ENCODE measurements at regions of chr19 and their contacts with region 1.

Region 1: DNA sequence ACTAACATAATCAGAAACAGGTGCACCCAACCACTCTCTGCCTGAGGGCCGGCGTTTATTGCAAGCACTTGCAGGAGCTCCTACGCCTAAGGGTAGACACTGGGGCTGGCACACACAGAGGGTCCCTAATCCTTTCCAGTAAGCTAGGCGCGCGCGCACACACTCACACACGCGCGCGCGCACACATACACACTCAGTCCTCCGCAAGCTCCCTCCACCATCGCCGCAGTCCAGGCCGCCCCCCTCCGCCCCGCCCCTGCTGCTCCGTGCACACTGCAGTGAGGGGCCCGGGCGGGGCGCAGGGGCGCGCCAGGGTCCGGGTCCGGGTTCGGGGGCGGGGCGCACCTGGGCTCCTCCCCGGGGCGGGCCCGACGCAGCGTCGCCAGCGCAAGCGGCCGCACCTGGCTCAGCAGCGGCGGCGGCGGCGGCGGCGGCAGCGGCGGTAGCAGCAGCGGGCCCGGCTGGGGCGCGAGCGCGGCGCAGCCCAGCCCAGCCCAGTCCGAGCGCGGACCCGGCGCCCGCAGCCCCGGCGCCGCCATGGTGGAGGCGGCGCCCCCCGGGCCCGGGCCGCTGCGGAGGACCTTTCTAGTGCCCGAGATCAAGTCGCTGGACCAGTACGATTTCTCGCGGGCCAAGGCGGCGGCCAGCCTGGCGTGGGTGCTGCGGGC is at the start of gene CAMSAP3:
- DNase-seq: peak; percentile 64
- ATAC-seq: peak; percentile 84
- H3K4me3 ChIP-seq: peak within 1 kb of the TSS; percentile 71 to 98 (median 93)
- H3K27ac ChIP-seq: peak within 1 kb of the TSS; percentile 74
- H3K4me1 ChIP-seq: peaks cover 60% of the 10 kb centered on the region
- H3K27me3 ChIP-seq: no peaks in the 10 kb centered on the region
- CTCF ChIP-seq: no peak; the same call in 1 of the 2 replicates
- EP300 ChIP-seq: no peak
- POLR2A ChIP-seq: peak in 1 of 2 experiments; percentile 38; a peak in 1 of 4 replicates
- RAD21 ChIP-seq: no peak
- total RNA-seq, gene CAMSAP3: 9.1 and 11.8 TPM in 2 replicates

Region 2: GRCh38 chr19:7578127-7578526 is 17.5 kb before region 1 on chr19:
- CTCF ChIA-PET with region 1: no interaction called
- POLR2A ChIA-PET with region 1: no interaction called
- in situ Hi-C with region 1: no loop called
- intact Hi-C with region 1: no loop called
- DNase-seq: no peak
- ATAC-seq: no peak
- H3K4me3 ChIP-seq: no peak overlapping the region
- H3K27ac ChIP-seq: no peak overlapping the region
- H3K4me1 ChIP-seq: no peaks in the 10 kb centered on the region
- H3K27me3 ChIP-seq: peaks cover 2 to 20% of the 10 kb centered on the region in 2 experiments; a peak in 2 of 5 replicates
- CTCF ChIP-seq: no peak
- EP300 ChIP-seq: no peak
- POLR2A ChIP-seq: no peak
- RAD21 ChIP-seq: no peak

Region 3: GRCh38 chr19:7605490-7606222 is 10.1 kb after region 1 on chr19:
- CTCF ChIA-PET with region 1: no interaction called
- POLR2A ChIA-PET with region 1: interaction called, 21 read pairs
- in situ Hi-C with region 1: no loop called
- intact Hi-C with region 1: no loop called
- DNase-seq: peak; percentile 57
- ATAC-seq: peak; percentile 70
- H3K4me3 ChIP-seq: no peak overlapping the region
- H3K27ac ChIP-seq: no peak overlapping the region
- H3K4me1 ChIP-seq: no peaks in the 10 kb centered on the region; the same call in 1 of the 2 replicates
- H3K27me3 ChIP-seq: no peaks in the 10 kb centered on the region
- CTCF ChIP-seq: no peak
- EP300 ChIP-seq: no peak
- POLR2A ChIP-seq: no peak
- RAD21 ChIP-seq: no peak

Region 4: DNA sequence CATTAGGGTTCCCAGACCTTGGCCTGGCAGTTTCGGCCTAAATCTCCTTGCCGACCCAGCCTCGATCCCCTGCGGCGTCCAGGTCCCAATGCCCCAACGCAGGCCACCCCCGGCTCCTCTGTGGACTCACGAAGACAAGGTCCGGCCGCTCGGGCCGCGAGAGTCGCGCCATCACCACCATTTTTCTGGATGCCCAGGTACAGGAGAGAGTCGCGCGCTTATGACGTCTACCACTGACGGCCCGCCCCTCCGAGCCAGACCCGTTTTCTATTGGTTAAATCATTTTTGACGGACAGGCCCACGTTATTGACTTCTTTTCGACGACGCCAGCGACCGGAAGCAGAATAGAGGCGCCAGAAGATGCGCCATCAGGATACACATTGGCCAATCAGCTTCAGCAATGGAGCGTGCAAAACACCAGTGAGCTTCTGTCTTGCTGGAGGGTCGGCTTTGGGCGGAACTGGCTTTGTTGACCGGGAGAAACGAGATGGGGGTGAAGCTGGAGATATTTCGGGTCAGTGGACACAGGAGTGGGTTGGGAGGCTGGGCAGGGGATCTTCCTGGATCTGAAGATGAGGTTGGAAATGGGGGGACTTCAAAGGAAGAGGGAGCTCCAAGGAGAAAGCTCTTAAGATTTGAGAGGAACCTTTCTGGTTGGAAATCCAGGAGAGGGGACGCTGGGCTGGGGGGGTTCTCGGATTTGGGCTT is 33.9 kb after region 1 on chr19 and contains the starts of genes PET100 and XAB2:
- CTCF ChIA-PET with region 1: no interaction called
- POLR2A ChIA-PET with region 1: interaction called, 15 read pairs
- in situ Hi-C with region 1: no loop called
- intact Hi-C with region 1: no loop called
- DNase-seq: peak; percentile 98
- ATAC-seq: peak; percentile 92
- H3K4me3 ChIP-seq: peak within 1 kb of the TSS; percentile 94 to 98 (median 97)
- H3K27ac ChIP-seq: peak within 1 kb of the TSS; percentile 71
- H3K4me1 ChIP-seq: peaks cover 22% of the 10 kb centered on the region
- H3K27me3 ChIP-seq: no peaks in the 10 kb centered on the region; a peak in 1 of 5 replicates
- CTCF ChIP-seq: no peak
- EP300 ChIP-seq: no peak
- POLR2A ChIP-seq: peak; percentile 69 to 71
- RAD21 ChIP-seq: no peak
- total RNA-seq, gene PET100: 59.9 and 66.5 TPM in 2 replicates
- total RNA-seq, gene XAB2: 6.2 and 8.6 TPM in 2 replicates

Region 5: DNA sequence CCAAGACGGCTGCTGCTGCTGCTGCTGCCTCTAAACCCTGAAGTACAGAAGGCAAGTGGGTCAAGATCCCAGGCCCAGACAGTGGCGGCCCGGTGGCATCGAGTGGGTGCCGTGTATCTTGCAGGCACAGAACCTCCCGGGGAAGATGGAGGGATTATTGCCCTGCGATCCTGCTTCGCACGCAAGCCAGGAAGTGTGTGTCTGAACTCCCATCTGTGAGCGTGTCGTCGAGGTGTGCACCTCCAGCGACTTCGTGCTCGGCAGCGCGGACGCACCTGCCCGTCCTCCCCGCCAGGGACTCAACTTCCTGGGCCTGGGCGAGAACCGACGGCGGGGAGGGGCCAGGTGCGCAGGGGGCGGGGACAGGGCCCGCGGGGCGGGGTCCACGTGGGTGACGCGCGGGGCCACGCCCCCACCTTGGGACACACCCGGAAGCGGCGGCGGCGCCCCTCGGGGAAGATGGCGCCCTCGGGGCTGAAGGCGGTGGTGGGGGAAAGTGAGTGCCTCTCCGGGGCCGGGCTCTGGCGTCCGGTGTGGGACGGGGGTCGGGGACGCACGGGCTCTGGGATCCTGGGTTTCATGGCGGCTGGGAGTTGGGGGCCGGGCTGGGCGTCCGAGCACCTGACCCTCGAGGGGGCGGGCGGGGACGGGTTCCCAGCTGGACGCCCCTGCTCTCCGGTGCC is 41.2 kb after region 1 on chr19 and contains the start of gene STXBP2:
- CTCF ChIA-PET with region 1: no interaction called
- POLR2A ChIA-PET with region 1: interaction called, 12 read pairs
- in situ Hi-C with region 1: no loop called
- intact Hi-C with region 1: no loop called
- DNase-seq: peak; percentile 61
- ATAC-seq: peak; percentile 80
- H3K4me3 ChIP-seq: peak within 1 kb of the TSS; percentile 93 to 96 (median 95)
- H3K27ac ChIP-seq: peak within 1 kb of the TSS; percentile 61
- H3K4me1 ChIP-seq: peaks cover 23% of the 10 kb centered on the region
- H3K27me3 ChIP-seq: no peaks in the 10 kb centered on the region; a peak in 1 of 5 replicates
- CTCF ChIP-seq: no peak
- EP300 ChIP-seq: no peak; a peak in 1 of 4 replicates
- POLR2A ChIP-seq: peak in 1 of 2 experiments; percentile 83
- RAD21 ChIP-seq: no peak
- total RNA-seq, gene STXBP2: 17.8 and 22.8 TPM in 2 replicates

Measured in HepG2 (cell line).